Heart left ventricle (tissue), 16 donors: ENCODE measurements at regions of chr3 and their contacts with region 1.

Region 1: GRCh38 chr3:15820911-15821310 is 23.1 kb upstream of the ANKRD28 start:
- DNase-seq: no peak
- ATAC-seq: no peak
- H3K4me3 ChIP-seq: no peak overlapping the region
- H3K27ac ChIP-seq: no peak overlapping the region
- H3K4me1 ChIP-seq: peaks cover 0 to 21% (median 6%) of the 10 kb centered on the region in 12 donors
- H3K27me3 ChIP-seq: no peaks in the 10 kb centered on the region
- CTCF ChIP-seq: no peak
- POLR2A ChIP-seq: no peak

Region 2: DNA sequence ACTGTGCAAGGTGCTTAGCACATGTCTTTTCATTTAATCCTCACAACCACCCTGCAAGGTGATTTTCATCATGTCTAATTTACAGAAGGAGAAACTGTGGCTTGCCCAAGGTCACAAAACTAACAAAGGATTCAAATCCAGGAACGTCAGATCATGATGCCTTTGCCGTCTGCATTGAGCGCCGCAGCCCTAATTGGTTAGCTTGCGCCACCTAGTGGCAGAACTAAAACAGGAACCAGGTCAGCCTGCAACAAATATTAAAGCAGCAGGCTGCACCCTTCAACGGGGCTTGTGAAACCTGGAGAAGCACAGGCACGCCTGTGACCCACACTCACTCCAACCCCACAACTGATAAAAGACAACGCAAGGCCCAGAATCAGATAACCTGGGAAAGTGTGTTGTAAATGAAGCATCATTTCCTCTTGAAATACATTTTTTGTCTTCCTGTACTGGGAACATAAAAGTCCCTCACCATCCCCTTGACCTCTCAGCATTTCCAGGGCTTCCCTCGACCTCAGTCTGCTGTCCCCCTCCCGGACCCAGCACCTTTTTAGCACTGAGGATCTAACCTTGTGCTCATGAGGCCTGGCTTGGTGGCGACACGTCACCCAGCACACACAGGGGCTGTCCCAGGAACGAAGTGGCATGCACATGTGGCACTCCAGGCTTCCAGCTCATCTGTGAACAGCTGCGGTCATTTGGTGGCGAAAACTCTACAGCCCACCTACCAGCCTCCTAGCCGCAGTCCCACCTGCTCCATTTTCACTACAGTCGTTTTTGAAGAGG is 426.6 kb after region 1 on chr3:
- intact Hi-C with region 1: loop called in 6 of 10 experiments (anchors 2 to 5 kb)
- DNase-seq: peak; percentile 75 to 86 (median 79)
- ATAC-seq: peak; percentile 40 to 68 (median 65)
- H3K4me3 ChIP-seq: no peak overlapping the region
- H3K27ac ChIP-seq: no peak overlapping the region
- H3K4me1 ChIP-seq: peaks cover 0 to 28% (median 13%) of the 10 kb centered on the region in 12 donors
- H3K27me3 ChIP-seq: no peaks in the 10 kb centered on the region
- CTCF ChIP-seq: peak; percentile 85 to 98 (median 94)
- POLR2A ChIP-seq: no peak

Region 3: GRCh38 chr3:16801698-16802097 is 980.8 kb after region 1 on chr3:
- intact Hi-C with region 1: no loop called
- DNase-seq: no peak
- ATAC-seq: peak in 2 of 4 donors; percentile 38 to 55
- H3K4me3 ChIP-seq: no peak overlapping the region
- H3K27ac ChIP-seq: peak overlapping the region in 6 of 12 donors; percentile 6 to 71 (median 22)
- H3K4me1 ChIP-seq: peaks cover 0 to 49% (median 12%) of the 10 kb centered on the region in 12 donors
- H3K27me3 ChIP-seq: no peaks in the 10 kb centered on the region
- CTCF ChIP-seq: no peak
- POLR2A ChIP-seq: no peak